ENCODE measurements at regions of chr16 and their contacts with region 1.

Region 1: DNA sequence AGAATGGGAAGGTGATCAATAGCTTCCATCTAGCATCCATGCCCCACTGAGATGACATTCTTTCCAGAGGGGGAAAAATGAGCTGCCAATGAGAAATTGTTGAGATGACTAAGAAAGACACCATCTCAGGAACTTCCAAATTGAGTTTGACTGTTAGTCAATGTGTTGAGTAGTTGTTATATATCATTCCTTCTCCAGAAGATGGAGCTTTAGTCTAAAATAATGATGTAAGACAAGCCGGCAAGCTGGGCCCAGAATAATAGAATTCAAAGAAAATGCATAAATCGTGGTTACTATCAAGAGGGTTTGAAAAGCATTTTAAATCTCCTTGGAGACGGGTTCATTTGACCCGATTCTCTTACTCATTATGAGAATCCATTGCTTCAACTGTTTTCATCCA is 71.0 kb upstream of the ATF7IP2 start:
- DNase-seq: no peak
- ATAC-seq: no peak; the same call in 1 of the 2 replicates
- H3K4me3 ChIP-seq: no peak overlapping the region
- H3K27ac ChIP-seq: no peak overlapping the region
- H3K4me1 ChIP-seq: no peaks in the 10 kb centered on the region
- H3K27me3 ChIP-seq: no peaks in the 10 kb centered on the region
- CTCF ChIP-seq: no peak; the same call in 1 of the 2 replicates

Region 2: DNA sequence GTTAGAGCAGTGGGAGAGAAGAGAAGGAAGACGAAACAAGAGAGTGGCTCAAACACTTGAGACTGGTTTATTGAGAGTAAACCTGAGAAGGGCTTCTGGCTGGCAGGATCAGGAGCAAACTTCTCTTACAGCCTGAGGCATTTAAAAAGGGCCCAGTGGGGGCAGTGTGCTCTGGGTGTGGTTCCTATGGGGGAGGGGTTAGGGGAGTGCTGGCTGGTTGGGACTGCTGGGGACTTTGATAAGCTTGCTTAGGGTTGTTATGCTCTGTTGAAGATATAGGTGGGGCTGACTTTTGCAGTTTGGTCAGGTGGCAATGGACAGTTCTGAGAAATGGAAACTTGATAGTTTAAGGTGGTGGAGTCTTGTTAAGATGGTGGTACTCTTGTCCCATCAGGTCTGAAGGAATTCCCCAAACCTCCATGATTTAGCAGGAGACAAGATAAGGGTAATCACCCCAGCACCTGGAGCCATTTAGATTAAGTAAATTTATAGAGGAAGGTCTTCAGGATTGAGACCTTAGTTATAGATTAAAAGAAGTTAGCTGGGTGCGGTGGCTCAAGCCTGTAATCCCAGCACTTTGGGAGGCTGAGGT is 186.3 kb after region 1 on chr16:
- CTCF ChIA-PET with region 1: interaction called, 10 read pairs
- POLR2A ChIA-PET with region 1: no interaction called
- in situ Hi-C with region 1: no loop called
- intact Hi-C with region 1: loop called (anchors 5 kb)
- DNase-seq: no peak
- ATAC-seq: no peak
- H3K4me3 ChIP-seq: no peak overlapping the region
- H3K27ac ChIP-seq: no peak overlapping the region
- H3K4me1 ChIP-seq: no peaks in the 10 kb centered on the region
- H3K27me3 ChIP-seq: no peaks in the 10 kb centered on the region
- CTCF ChIP-seq: no peak

Region 3: DNA sequence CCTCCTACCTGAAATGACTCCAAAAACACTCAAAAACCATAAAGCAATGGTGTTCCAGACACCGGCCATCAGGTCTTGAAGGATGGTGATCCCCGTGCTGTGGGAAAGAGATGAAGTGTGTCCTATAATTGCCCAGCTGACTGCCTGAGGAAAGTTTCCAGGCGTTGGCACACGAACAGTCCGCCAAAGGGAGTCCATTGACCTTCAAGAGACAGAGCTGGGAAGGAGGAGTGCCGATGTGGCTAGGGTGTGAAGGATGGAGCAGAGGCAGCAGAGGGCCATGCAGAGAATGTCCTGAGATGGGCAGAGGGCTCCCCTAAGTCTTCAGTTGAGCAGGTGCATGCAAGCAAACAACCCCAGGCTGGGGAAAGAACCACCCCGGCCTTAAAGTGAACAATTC is 417.0 kb after region 1 on chr16:
- CTCF ChIA-PET with region 1: interaction called, 12 read pairs
- POLR2A ChIA-PET with region 1: no interaction called
- in situ Hi-C with region 1: no loop called
- intact Hi-C with region 1: loop called (anchors 10 kb)
- DNase-seq: no peak
- ATAC-seq: no peak
- H3K4me3 ChIP-seq: no peak overlapping the region
- H3K27ac ChIP-seq: no peak overlapping the region
- H3K4me1 ChIP-seq: no peaks in the 10 kb centered on the region
- H3K27me3 ChIP-seq: no peaks in the 10 kb centered on the region
- CTCF ChIP-seq: no peak